ENCODE measurements at regions of chr13 and their contacts with region 1.

Region 1: DNA sequence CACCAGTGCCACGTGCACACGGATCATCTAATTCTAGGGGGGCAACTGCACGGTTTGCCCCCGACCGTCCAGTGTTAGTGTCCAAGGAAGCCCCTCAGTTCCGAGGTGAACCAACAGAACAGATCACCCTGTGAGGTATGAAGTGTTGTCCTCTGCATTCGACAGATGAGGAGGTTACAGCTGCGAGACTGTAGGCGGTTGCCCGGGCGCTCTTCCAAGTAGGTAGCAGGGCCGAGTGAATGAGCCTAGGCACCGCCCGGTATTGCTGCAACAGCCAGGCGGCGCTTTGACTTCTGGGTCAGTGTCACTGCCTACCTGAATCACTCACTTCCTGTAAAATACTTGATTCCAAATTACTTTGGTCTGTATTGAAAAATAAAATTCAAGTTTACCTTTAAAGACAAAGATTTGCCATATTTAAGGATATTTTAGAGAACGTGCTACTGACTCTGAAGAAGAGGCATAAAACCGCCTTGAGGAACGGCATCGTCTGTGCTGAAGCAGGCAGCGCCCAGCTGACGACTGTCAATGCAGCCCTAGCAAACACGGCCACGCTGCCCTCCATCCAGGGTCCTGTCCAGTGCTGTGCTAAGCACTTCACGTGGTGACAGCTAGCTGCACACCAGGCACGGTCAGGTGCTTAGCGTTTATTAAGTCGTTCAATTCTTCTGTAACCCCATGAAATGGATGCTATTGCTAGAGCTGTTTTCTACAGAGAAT is 19.3 kb upstream of the RASA3 start:
- DNase-seq: peak in 5 of 9 donors; percentile 45 to 73 (median 57)
- ATAC-seq: no peak
- H3K4me3 ChIP-seq: peak overlapping the region; percentile 39
- H3K4me3 Mint-ChIP-seq: peak overlapping the region; percentile 56 to 90 (median 67)
- H3K27ac ChIP-seq: peak overlapping the region; percentile 92
- H3K27ac Mint-ChIP-seq: peak overlapping the region; percentile 85 to 100 (median 100)
- H3K4me1 ChIP-seq: peaks cover 64 to 72% of the 10 kb centered on the region in 2 donors
- H3K4me1 Mint-ChIP-seq: peaks cover 59 to 83% (median 80%) of the 10 kb centered on the region in 7 donors
- H3K27me3 ChIP-seq: no peaks in the 10 kb centered on the region
- H3K27me3 Mint-ChIP-seq: peaks cover 0 to 17% (median 0%) of the 10 kb centered on the region in 5 donors

Region 2: DNA sequence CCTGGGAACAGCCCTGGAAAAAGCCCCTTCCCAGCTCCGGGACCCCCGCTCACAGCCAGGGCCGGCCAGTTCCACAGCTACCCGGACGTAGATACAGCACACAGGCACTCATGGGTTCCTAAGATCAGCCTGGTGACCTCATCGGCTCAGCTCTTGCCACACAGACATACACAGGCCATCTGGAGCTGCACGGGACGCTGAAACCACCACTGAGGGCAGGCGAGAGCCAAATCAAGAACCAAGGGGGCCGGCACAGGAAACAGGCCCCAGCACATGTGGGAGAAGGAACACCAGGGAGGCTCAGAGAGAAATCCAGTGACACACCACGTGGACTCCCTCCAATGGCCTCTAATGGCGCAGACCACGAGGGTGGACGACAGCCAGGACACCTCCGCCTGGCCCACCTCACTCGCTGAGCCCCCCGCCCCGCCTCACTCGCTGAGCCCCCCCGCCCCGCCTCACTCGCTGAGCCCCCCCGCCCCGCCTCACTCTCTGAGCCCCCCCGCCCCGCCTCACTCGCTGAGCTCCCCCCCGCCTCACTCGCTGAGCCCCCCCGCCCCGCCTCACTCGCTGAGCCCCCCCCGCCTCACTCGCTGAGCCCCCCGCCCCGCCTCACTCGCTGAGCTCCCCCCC is 108.2 kb before region 1 on chr13:
- CTCF ChIA-PET with region 1: no interaction called
- POLR2A ChIA-PET with region 1: no interaction called
- intact Hi-C with region 1: no loop called
- DNase-seq: peak in 1 of 9 donors; percentile 31
- ATAC-seq: peak; percentile 78
- H3K4me3 ChIP-seq: no peak overlapping the region
- H3K4me3 Mint-ChIP-seq: peak overlapping the region in 5 of 10 donors; percentile 19 to 71 (median 45)
- H3K27ac ChIP-seq: no peak overlapping the region
- H3K27ac Mint-ChIP-seq: peak overlapping the region; percentile 29 to 93 (median 76)
- H3K4me1 ChIP-seq: peaks cover 8 to 14% of the 10 kb centered on the region in 2 donors
- H3K4me1 Mint-ChIP-seq: peaks cover 34 to 77% (median 63%) of the 10 kb centered on the region in 7 donors
- H3K27me3 ChIP-seq: no peaks in the 10 kb centered on the region
- H3K27me3 Mint-ChIP-seq: no peaks in the 10 kb centered on the region

Region 3: DNA sequence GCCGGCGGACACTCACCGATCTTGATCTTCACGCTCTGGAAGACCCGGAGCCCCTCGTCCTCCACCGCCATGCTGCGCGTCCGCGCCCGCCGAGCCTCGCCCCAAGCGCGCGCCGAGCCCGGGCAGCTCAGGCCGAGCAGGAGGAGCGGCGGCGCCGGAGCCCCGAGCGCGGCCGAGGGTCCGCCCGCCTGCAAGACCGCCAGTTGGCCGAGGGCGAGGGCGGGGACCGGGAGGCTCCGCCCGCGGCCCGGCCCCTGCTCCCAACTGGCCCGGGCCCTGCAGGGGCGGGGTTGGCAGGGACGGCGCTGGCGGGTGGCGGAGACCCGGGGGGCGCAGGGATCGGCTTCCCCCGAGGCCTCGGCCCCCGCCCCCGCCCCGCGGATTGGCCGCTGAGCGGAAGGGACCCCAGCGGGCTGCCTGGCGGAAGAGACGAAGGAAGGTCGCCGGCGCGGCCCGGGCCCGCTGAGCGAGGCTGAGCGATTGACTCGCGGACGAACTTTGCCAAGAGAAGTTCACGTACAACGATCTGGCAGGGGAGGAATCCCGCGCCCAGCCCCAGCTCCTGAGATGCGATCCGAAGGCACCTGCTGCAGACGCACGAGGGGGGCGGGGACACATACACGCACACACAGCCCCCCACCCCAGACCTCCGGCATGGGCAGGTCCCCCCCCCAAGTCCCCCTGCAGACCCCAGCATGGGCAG is 19.2 kb before region 1 on chr13 and contains the start of gene RASA3:
- CTCF ChIA-PET with region 1: interaction called, 6 read pairs
- POLR2A ChIA-PET with region 1: interaction called, 128 read pairs
- intact Hi-C with region 1: loop called (anchors 1 kb)
- DNase-seq: peak in 8 of 9 donors; percentile 52 to 75 (median 58)
- ATAC-seq: peak; percentile 69
- H3K4me3 ChIP-seq: peak within 1 kb of the TSS; percentile 90
- H3K4me3 Mint-ChIP-seq: peak within 1 kb of the TSS; percentile 96 to 100 (median 100)
- H3K27ac ChIP-seq: peak within 1 kb of the TSS; percentile 85
- H3K27ac Mint-ChIP-seq: peak within 1 kb of the TSS; percentile 82 to 100 (median 99)
- H3K4me1 ChIP-seq: peaks cover 32 to 49% of the 10 kb centered on the region in 2 donors
- H3K4me1 Mint-ChIP-seq: peaks cover 36 to 74% (median 56%) of the 10 kb centered on the region in 7 donors
- H3K27me3 ChIP-seq: no peaks in the 10 kb centered on the region
- H3K27me3 Mint-ChIP-seq: peaks cover 0 to 4% (median 0%) of the 10 kb centered on the region in 5 donors
- total RNA-seq, gene RASA3: 110 to 227 (median 199) TPM

Measured in naive thymus-derived CD4-positive, alpha-beta T cell (primary cell).